ENCODE measurements at regions of chr2 and their contacts with region 1.

Region 1: DNA sequence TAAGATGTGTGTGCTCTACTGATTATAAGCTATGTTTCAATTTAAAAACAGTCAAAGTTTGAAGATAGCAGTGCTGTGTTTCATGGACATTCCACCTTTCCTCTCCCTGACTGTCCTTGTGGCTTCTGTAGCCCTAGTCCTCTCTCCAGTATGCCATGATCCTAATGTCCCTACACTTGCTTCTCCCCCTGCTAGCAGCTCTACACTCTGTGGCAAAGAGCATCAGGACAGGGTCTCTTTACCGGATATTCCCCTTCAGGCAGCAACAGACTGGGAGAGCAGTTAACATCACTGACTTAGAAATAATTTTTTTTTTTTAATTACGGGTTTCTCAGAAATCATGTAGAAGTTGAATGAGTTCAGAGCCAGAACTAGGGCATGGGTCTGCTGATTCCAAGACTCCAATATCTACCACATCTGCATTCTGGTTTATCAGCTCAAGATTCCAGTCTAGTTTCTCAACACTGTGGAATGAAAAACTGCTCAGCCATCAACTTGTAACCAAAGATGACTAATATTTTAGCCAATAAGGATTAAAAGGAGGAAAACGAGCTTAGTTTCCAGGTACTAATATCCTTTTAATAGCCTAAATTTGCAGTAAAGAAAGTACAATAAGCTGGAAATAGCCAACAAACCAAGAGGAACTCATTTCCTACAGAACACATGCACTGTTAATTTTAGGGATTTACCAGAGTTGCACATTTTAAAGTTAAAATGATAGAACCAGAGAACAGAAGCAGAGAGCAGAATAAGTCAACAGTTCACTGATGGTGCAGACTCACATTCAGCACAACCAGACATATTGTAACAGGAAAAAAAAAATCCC is 45.2 kb downstream of the TMEM131 start:
- H3K4me3 Mint-ChIP-seq: no peak overlapping the region
- H3K27ac Mint-ChIP-seq: peak overlapping the region; percentile 52
- H3K4me1 Mint-ChIP-seq: peaks cover 53% of the 10 kb centered on the region
- H3K27me3 Mint-ChIP-seq: no peaks in the 10 kb centered on the region

Region 2: GRCh38 chr2:97995734-97996624 is 45.4 kb after region 1 on chr2 and contains the start of gene TMEM131:
- intact Hi-C with region 1: loop called (anchors 5 kb)
- H3K4me3 Mint-ChIP-seq: peak within 1 kb of the TSS; percentile 89
- H3K27ac Mint-ChIP-seq: peak within 1 kb of the TSS; percentile 91
- H3K4me1 Mint-ChIP-seq: peaks cover 35% of the 10 kb centered on the region
- H3K27me3 Mint-ChIP-seq: peaks cover 24% of the 10 kb centered on the region

Measured in dendritic cell treated with granulocyte-macrophage colony-stimulating factor and Interleukin-4, amounts not matched to agents 40 ng/mL and 50 ng/mL, for 4 days (primary cell).